Dendritic cell treated with granulocyte-macrophage colony-stimulating factor and Interleukin-4, amounts not matched to agents 40 ng/mL and 50 ng/mL, for 4 days (primary cell): ENCODE measurements at regions of chr20 and their contacts with region 1.

Region 1: DNA sequence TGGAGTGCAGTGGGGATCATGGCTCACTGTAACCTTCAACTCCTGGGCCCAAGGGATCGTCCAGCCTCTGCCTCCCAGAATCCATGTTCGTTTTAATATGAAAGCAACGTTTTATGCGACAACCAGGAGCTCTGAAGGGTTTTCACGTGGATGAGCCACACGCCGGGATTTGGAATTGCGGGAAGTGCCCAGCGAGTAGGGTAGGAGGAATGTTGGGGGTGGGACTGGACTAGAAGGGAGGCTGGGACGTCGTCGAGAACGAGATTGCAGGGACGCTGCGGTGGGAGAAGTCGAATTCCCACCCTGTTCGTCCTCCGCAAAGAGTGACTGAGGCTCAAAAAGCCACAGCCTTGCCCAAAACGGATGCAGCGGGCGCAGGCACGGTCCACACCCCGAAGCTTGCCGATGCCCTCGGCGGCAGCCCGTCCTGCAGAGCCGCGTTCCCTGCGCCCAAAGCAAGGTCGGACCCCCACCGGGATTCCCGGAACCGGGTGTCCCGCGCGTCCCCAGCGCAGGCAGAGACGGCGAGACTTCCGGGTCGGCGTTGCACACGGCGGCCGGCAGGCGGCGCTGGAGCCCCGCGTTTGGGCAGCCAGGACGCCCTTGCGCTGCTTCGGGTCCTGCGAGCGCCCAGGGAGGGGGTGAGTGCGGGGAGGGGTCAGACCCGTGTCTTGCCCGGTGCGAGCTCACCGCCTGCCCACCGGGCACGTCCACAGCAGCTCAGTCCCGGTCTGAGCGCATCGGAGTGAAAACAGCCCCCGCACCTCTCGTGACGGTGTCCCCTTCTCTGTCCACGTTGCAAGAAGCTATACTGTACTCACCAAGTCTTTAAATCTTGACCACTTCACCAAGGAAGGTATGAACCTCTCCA is 87.8 kb downstream of the DHX35 start:
- H3K4me3 Mint-ChIP-seq: peak overlapping the region; percentile 81
- H3K27ac Mint-ChIP-seq: peak overlapping the region; percentile 86
- H3K4me1 Mint-ChIP-seq: peaks cover 11% of the 10 kb centered on the region
- H3K27me3 Mint-ChIP-seq: peaks cover 20% of the 10 kb centered on the region

Region 2: GRCh38 chr20:38926142-38926933 is 123.6 kb before region 1 on chr20 and contains the start of gene FAM83D:
- intact Hi-C with region 1: loop called (anchors 2 kb)
- H3K4me3 Mint-ChIP-seq: peak within 1 kb of the TSS; percentile 78
- H3K27ac Mint-ChIP-seq: peak within 1 kb of the TSS; percentile 61
- H3K4me1 Mint-ChIP-seq: peaks cover 22% of the 10 kb centered on the region
- H3K27me3 Mint-ChIP-seq: no peaks in the 10 kb centered on the region

Region 3: DNA sequence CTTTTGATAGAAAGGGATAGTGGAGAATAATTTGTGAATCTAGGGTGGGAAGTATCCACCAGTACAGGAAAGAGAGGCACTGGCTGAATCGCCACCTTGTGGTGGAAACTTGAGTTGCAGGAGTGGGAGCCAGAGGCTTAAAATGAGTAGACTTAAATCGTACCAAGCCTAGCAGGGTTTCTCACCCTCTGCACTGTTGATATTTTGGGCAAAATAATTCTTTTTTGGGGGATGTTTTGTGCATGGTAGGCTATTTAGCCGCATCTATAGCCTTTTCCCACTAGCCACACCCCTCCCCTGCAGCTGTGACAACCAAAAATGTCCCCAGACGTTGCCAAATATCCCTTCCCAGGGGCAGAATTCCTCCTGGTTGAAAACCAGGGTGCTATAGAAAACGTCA is 31.3 kb after region 1 on chr20:
- intact Hi-C with region 1: loop called (anchors 1 kb)
- H3K4me3 Mint-ChIP-seq: no peak overlapping the region
- H3K27ac Mint-ChIP-seq: no peak overlapping the region
- H3K4me1 Mint-ChIP-seq: no peaks in the 10 kb centered on the region
- H3K27me3 Mint-ChIP-seq: peaks cover 25% of the 10 kb centered on the region

Region 4: GRCh38 chr20:39195582-39196021 is 145.7 kb after region 1 on chr20:
- intact Hi-C with region 1: no loop called
- H3K4me3 Mint-ChIP-seq: no peak overlapping the region
- H3K27ac Mint-ChIP-seq: no peak overlapping the region
- H3K4me1 Mint-ChIP-seq: no peaks in the 10 kb centered on the region
- H3K27me3 Mint-ChIP-seq: peaks cover 3% of the 10 kb centered on the region

Region 5: DNA sequence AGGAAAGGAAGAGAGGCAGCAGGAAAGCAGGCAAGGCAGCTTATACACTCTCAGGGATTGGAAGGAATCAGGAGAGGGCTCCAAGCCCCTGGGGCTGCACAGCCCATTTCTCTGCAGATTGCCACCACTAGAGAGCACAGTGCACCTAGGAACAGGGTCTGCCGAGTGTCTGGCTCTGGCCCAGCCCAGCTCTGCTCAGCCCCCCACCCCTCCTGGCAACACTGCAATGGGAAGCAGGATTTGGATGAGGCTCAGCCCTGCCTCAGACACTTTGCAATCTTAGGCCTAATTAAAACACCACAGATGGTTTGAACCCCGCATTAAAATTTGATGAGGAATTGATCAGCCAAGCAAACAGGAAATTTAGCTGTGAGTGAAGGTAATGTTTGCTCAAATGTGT is 164.9 kb after region 1 on chr20:
- intact Hi-C with region 1: no loop called
- H3K4me3 Mint-ChIP-seq: no peak overlapping the region
- H3K27ac Mint-ChIP-seq: no peak overlapping the region
- H3K4me1 Mint-ChIP-seq: no peaks in the 10 kb centered on the region
- H3K27me3 Mint-ChIP-seq: peaks cover 4% of the 10 kb centered on the region